Astrocyte of the cerebellum (primary cell): ENCODE measurements at regions of chr22 and their contacts with region 1.

Region 1: GRCh38 chr22:20981787-20982562 is at the start of gene LZTR1:
- DNase-seq: peak; percentile 55
- H3K4me3 ChIP-seq: peak within 1 kb of the TSS; percentile 90
- CTCF ChIP-seq: peak; percentile 68

Region 2: DNA sequence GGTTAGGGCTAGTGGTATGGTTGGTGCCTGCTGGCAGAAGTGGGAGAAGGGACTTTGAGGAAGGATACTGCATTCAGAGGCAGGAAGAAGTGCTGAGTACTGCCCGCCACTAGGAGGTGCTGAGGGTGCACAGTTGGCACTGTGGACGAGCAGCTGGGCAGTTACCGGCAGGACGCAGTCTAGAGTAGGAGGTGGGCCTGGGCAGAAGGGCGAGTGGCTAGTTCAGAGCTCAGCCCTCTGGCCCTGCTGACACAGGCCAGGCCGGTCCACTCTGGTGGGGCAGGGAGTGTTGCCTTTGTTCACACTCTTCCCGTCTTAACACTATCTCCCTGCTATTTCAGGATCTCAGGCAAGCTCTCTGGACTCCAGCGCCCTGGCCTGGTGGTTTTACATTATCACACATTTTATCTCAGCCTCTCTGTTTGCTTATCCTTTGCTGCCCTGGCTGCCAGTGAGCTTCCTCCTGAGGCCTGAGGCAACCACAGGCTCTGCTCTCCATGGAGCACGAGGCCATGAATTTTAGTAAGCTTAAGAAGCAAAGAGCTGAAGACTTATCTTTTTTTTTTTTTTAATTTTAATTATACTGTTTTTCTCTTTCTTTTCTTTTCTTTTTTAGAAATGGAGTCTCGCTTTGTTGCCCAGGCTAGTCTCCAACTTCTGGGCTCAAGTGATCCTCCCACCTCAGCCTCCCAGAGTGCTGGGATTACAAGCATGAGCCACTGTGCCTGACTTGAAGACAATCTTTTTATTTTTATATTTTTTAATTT is 96.2 kb before region 1 on chr22:
- in situ Hi-C with region 1: loop called (anchors 10 kb)
- DNase-seq: peak; percentile 49
- H3K4me3 ChIP-seq: no peak overlapping the region
- CTCF ChIP-seq: peak; percentile 94